MCF 10A (cell line): ENCODE measurements at regions of chr22 and their contacts with region 1.

Region 1: DNA sequence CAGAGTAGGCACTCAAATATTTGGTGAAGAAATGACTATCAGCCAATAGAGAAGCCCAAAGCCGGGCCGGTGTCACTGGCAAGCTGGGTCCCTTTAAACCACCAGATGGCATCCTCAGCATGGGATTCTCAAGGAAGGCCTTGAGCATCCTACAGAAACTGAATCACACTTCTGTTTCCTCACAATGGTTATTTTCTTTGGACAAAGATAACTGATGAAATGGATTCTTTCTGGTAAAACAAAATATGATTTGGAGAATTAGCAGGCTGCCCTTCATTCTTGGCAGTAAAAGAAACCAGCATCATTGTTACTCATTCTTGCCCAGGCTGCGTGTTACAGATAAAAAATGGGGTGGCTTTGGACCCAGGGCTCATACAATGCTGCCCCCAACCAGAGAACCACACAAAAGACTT is 30.3 kb upstream of the ASPHD2 start:
- DNase-seq: peak; percentile 78
- H3K4me3 Mint-ChIP-seq: no peak overlapping the region
- H3K27ac Mint-ChIP-seq: no peak overlapping the region
- H3K4me1 Mint-ChIP-seq: peaks cover 5% of the 10 kb centered on the region
- H3K27me3 Mint-ChIP-seq: peaks cover 29% of the 10 kb centered on the region
- CTCF ChIP-seq: peak; percentile 81

Region 2: GRCh38 chr22:26428515-26429457 is 30.0 kb after region 1 on chr22 and contains the start of gene ASPHD2:
- CTCF ChIA-PET with region 1: interaction called, 11 read pairs
- POLR2A ChIA-PET with region 1: no interaction called
- intact Hi-C with region 1: no loop called
- DNase-seq: peak; percentile 39
- H3K4me3 Mint-ChIP-seq: peak within 1 kb of the TSS; percentile 96
- H3K27ac Mint-ChIP-seq: peak within 1 kb of the TSS; percentile 84
- H3K4me1 Mint-ChIP-seq: peaks cover 15% of the 10 kb centered on the region
- H3K27me3 Mint-ChIP-seq: peaks cover 19% of the 10 kb centered on the region
- CTCF ChIP-seq: no peak
- total RNA-seq, gene ASPHD2: 4.0 and 4.8 TPM in 2 replicates

Region 3: GRCh38 chr22:26442086-26442756 is 43.5 kb after region 1 on chr22:
- CTCF ChIA-PET with region 1: no interaction called
- POLR2A ChIA-PET with region 1: no interaction called
- intact Hi-C with region 1: no loop called
- DNase-seq: no peak
- H3K4me3 Mint-ChIP-seq: no peak overlapping the region
- H3K27ac Mint-ChIP-seq: no peak overlapping the region
- H3K4me1 Mint-ChIP-seq: no peaks in the 10 kb centered on the region
- H3K27me3 Mint-ChIP-seq: no peaks in the 10 kb centered on the region
- CTCF ChIP-seq: no peak